ENCODE measurements at regions of chr19 and their contacts with region 1.

Region 1: GRCh38 chr19:17511724-17512573 is 500 bp downstream of the PGLS start:
- DNase-seq: peak; percentile 88 to 89
- H3K4me3 ChIP-seq: peak overlapping the region; percentile 47 to 99 (median 97)
- H3K27ac ChIP-seq: peak overlapping the region; percentile 97 to 99 (median 98)
- H3K4me1 ChIP-seq: peaks cover 13 to 15% of the 10 kb centered on the region in 2 donors
- H3K27me3 ChIP-seq: no peaks in the 10 kb centered on the region
- CTCF ChIP-seq: peak in 3 of 6 experiments; percentile 16 to 36 (median 22)
- POLR2A ChIP-seq: peak; percentile 6 to 21

Region 2: DNA sequence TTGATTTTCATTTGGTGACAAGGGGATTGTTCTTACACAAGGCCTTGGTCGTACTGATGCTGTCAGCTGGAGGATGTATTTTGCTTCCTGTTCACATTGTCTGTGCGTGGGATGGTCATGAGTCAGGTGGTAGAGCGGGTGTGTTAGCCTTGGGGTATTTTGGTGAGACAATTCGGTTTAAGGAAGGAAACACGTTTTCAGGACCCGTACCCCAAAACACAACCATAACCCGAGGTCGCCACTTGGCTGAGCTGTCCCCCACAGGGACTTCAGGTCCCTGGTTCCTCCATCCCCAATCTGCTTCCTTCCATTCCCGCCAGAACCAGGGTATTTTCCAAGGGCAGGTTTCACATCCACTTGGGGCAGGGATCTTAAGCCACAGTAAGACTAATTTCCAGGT is 421.4 kb before region 1 on chr19:
- intact Hi-C with region 1: no loop called
- DNase-seq: no peak
- H3K4me3 ChIP-seq: no peak overlapping the region
- H3K27ac ChIP-seq: no peak overlapping the region
- H3K4me1 ChIP-seq: no peaks in the 10 kb centered on the region
- H3K27me3 ChIP-seq: no peaks in the 10 kb centered on the region
- CTCF ChIP-seq: no peak
- POLR2A ChIP-seq: no peak

Region 3: GRCh38 chr19:17555480-17555928 is 43.6 kb after region 1 on chr19 and contains the start of gene COLGALT1:
- intact Hi-C with region 1: loop called (anchors 5 kb)
- DNase-seq: peak; percentile 99
- H3K4me3 ChIP-seq: peak within 1 kb of the TSS; percentile 93 to 95 (median 93)
- H3K27ac ChIP-seq: peak within 1 kb of the TSS; percentile 55 to 82 (median 75)
- H3K4me1 ChIP-seq: peaks cover 12 to 15% of the 10 kb centered on the region in 2 donors
- H3K27me3 ChIP-seq: no peaks in the 10 kb centered on the region
- CTCF ChIP-seq: peak in 1 of 6 experiments; percentile 27
- POLR2A ChIP-seq: peak in 1 of 2 donors; percentile 55
- total RNA-seq, gene COLGALT1: 19.3 to 35.9 (median 33.0) TPM

Region 4: GRCh38 chr19:17775245-17775916 is 263.4 kb after region 1 on chr19:
- intact Hi-C with region 1: no loop called
- DNase-seq: no peak
- H3K4me3 ChIP-seq: no peak overlapping the region
- H3K27ac ChIP-seq: no peak overlapping the region
- H3K4me1 ChIP-seq: peaks cover 0 to 10% of the 10 kb centered on the region in 2 donors
- H3K27me3 ChIP-seq: no peaks in the 10 kb centered on the region
- CTCF ChIP-seq: peak in 1 of 6 experiments; percentile 25
- POLR2A ChIP-seq: no peak